ENCODE measurements at regions of chr6 and their contacts with region 1.

Region 1: GRCh38 chr6:26196846-26197648 is 109.8 kb downstream of the HFE start:
- DNase-seq: peak; percentile 96
- H3K4me3 ChIP-seq: peak overlapping the region; percentile 63
- H3K27ac ChIP-seq: peak overlapping the region; percentile 87
- H3K4me1 ChIP-seq: no peaks in the 10 kb centered on the region
- H3K27me3 ChIP-seq: no peaks in the 10 kb centered on the region
- CTCF ChIP-seq: no peak

Region 2: DNA sequence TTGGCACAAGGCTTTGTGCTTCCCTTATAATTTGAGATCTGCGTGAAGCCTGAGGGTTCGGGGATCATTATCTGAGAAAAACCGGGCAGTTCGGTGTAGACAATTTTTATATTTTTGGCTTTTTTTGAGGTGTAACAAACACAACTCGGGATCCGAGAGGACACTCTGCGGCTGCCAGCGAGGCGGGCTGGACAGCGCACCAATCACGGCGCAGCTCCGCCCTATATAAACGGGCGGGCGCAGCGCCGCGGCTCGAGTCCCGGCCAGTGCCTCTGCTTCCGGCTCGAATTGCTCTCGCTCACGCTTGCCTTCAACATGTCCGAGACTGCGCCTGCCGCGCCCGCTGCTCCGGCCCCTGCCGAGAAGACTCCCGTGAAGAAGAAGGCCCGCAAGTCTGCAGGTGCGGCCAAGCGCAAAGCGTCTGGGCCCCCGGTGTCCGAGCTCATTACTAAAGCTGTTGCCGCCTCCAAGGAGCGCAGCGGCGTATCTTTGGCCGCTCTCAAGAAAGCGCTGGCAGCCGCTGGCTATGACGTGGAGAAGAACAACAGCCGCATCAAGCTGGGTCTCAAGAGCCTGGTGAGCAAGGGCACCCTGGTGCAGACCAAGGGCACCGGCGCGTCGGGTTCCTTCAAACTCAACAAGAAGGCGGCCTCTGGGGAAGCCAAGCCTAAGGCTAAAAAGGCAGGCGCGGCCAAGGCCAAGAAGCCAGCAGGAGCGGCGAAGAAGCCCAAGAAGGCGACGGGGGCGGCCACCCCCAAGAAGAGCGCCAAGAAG is 40.8 kb before region 1 on chr6:
- CTCF ChIA-PET with region 1: no interaction called
- POLR2A ChIA-PET with region 1: interaction called, 20 read pairs
- intact Hi-C with region 1: no loop called
- DNase-seq: peak; percentile 91
- H3K4me3 ChIP-seq: peak overlapping the region; percentile 89
- H3K27ac ChIP-seq: peak overlapping the region; percentile 99
- H3K4me1 ChIP-seq: peaks cover 12% of the 10 kb centered on the region
- H3K27me3 ChIP-seq: no peaks in the 10 kb centered on the region
- CTCF ChIP-seq: no peak

Region 3: DNA sequence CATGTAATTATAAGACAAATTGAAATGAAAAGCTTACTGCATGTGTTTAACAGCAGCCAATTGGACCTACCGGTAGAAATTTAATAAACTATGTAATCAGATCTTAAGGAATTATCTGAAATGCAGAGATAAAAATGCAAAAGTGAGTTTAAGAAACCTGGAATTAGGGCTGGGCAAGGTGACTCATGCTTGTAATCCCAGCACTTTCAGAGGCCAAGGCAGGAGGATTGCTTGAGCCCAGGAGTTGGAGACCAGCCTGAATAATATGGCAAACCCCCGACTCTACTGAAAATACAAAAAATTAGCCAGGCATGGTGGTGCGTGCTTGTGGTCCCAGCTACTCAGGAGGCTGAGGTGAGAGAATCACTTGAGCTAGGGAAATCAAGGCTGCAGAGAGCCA is 35.7 kb before region 1 on chr6:
- CTCF ChIA-PET with region 1: no interaction called
- POLR2A ChIA-PET with region 1: interaction called, 20 read pairs
- intact Hi-C with region 1: no loop called
- DNase-seq: no peak
- H3K4me3 ChIP-seq: no peak overlapping the region
- H3K27ac ChIP-seq: peak overlapping the region; percentile 53
- H3K4me1 ChIP-seq: peaks cover 5% of the 10 kb centered on the region
- H3K27me3 ChIP-seq: no peaks in the 10 kb centered on the region
- CTCF ChIP-seq: no peak

Region 4: GRCh38 chr6:26183581-26184366 is 13.3 kb before region 1 on chr6:
- CTCF ChIA-PET with region 1: no interaction called
- POLR2A ChIA-PET with region 1: interaction called, 24 read pairs
- intact Hi-C with region 1: no loop called
- DNase-seq: peak; percentile 83
- H3K4me3 ChIP-seq: peak overlapping the region; percentile 33
- H3K27ac ChIP-seq: peak overlapping the region; percentile 68
- H3K4me1 ChIP-seq: peaks cover 10% of the 10 kb centered on the region
- H3K27me3 ChIP-seq: no peaks in the 10 kb centered on the region
- CTCF ChIP-seq: no peak

Measured in A673 (cell line).